BJ (cell line): ENCODE measurements at regions of chr11 and their contacts with region 1.

Region 1: GRCh38 chr11:124865921-124866583 is 820 bp downstream of the ROBO3 start:
- DNase-seq: no peak
- H3K4me3 ChIP-seq: peak overlapping the region; percentile 6; the same call in 1 of the 2 replicates
- H3K27me3 ChIP-seq: peaks cover 82% of the 10 kb centered on the region
- CTCF ChIP-seq: peak; percentile 70

Region 2: GRCh38 chr11:123822032-123822431 is 1044.0 kb before region 1 on chr11:
- CTCF ChIA-PET with region 1: no interaction called
- POLR2A ChIA-PET with region 1: no interaction called
- DNase-seq: no peak
- H3K4me3 ChIP-seq: no peak overlapping the region
- H3K27me3 ChIP-seq: no peaks in the 10 kb centered on the region
- CTCF ChIP-seq: no peak

Region 3: GRCh38 chr11:124656774-124657630 is 209.1 kb before region 1 on chr11:
- CTCF ChIA-PET with region 1: interaction called, 10 read pairs
- POLR2A ChIA-PET with region 1: no interaction called
- DNase-seq: no peak
- H3K4me3 ChIP-seq: no peak overlapping the region
- H3K27me3 ChIP-seq: no peaks in the 10 kb centered on the region; the same call in 1 of the 2 replicates
- CTCF ChIP-seq: no peak

Region 4: GRCh38 chr11:124673333-124674167 is 192.5 kb before region 1 on chr11 and contains the starts of genes SIAE and SPA17:
- CTCF ChIA-PET with region 1: interaction called, 20 read pairs
- POLR2A ChIA-PET with region 1: no interaction called
- DNase-seq: peak; percentile 79
- H3K4me3 ChIP-seq: peak within 1 kb of the TSS; percentile 96
- H3K27me3 ChIP-seq: no peaks in the 10 kb centered on the region; the same call in 1 of the 2 replicates
- CTCF ChIP-seq: no peak
- polyA plus RNA-seq, gene SIAE: 42.1 and 43.8 TPM in 2 replicates
- polyA plus RNA-seq, gene SPA17: 2.9 and 12.1 TPM in 2 replicates

Region 5: GRCh38 chr11:124807201-124807600 is 58.9 kb before region 1 on chr11:
- CTCF ChIA-PET with region 1: no interaction called
- POLR2A ChIA-PET with region 1: no interaction called
- DNase-seq: no peak
- H3K4me3 ChIP-seq: no peak overlapping the region
- H3K27me3 ChIP-seq: 0 out of 2 replicates have a peak, but pooled peaks cover 2% of the 10 kb centered on the region
- CTCF ChIP-seq: no peak

Region 6: DNA sequence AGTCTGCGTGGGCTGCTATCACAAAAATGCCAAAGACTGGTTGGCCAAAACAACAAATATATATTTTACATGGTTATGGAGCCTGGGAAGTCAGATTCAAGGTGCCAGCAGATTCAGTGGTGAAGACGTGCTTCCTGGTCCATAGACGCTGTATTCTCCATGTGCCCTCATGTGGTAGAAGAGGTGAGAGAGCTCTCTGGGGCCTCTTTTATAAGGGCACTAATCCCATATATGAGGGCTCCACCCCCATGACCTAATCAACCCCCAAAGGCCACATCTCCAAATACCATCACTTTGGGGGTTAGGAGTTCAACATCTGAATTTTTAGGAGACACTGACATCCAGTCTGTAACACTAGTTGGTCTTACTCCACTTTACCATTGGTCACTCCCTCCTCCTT is 10.6 kb before region 1 on chr11:
- CTCF ChIA-PET with region 1: interaction called, 30 read pairs
- POLR2A ChIA-PET with region 1: no interaction called
- DNase-seq: no peak
- H3K4me3 ChIP-seq: no peak overlapping the region
- H3K27me3 ChIP-seq: peaks cover 13% of the 10 kb centered on the region
- CTCF ChIP-seq: no peak

Region 7: GRCh38 chr11:124875943-124876817 is 10.1 kb after region 1 on chr11:
- CTCF ChIA-PET with region 1: interaction called, 26 read pairs
- POLR2A ChIA-PET with region 1: no interaction called
- DNase-seq: peak; percentile 58
- H3K4me3 ChIP-seq: peak overlapping the region; percentile 68
- H3K27me3 ChIP-seq: peaks cover 10% of the 10 kb centered on the region
- CTCF ChIP-seq: peak; percentile 74

Region 8: GRCh38 chr11:124882339-124883071 is 16.5 kb after region 1 on chr11:
- CTCF ChIA-PET with region 1: interaction called, 10 read pairs
- POLR2A ChIA-PET with region 1: no interaction called
- DNase-seq: no peak
- H3K4me3 ChIP-seq: no peak overlapping the region
- H3K27me3 ChIP-seq: no peaks in the 10 kb centered on the region
- CTCF ChIP-seq: no peak